BJ (cell line): ENCODE measurements at regions of chr22 and their contacts with region 1.

Region 1: GRCh38 chr22:25048659-25049647 is 96.4 kb downstream of the KIAA1671 start:
- DNase-seq: no peak
- H3K4me3 ChIP-seq: no peak overlapping the region
- H3K27me3 ChIP-seq: no peaks in the 10 kb centered on the region
- CTCF ChIP-seq: peak; percentile 77

Region 2: DNA sequence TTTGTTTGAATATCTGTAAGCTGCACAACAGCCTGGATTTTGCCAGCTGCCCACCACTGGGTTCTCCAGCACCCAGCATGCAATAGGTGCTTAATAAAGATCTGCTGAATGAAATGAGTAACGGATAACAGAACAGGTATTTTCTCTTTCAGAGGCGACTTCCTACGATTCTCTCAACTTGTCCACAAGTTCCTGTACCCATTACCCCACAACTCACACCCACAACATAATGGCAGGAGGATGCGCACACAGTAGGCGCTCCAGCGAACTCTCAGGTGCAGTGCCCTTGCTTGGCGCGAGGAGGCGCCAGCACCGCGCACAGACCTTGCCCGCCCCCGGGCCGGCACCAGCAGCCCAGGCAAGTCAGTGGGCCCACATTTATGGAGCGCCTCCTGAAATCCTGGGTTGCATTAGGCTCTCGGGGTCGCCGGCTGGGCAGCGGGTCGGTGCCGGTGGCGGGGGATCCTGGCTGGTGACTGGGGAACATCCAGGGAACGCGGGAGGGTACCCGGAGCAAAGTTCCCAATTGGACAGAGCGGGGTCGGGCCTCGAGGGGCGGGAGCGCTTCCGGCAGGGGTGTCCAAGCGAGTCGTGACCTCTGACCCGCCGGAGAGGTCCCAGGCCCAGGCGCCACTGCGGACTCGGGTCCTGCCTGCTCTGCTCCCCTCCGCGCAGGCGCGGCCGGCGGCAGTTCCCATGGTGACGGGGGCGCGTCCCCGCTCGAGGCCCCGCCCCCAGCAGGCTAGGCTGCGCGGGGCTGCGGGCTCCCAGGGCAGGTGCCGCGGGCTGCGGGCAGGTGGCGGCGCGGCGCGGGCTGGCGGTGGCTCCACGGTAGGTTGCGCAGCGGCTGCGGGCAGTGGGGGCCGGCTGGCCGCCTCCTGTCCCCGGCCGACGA is 96.8 kb before region 1 on chr22 and contains the start of gene KIAA1671:
- CTCF ChIA-PET with region 1: interaction called, 33 read pairs
- POLR2A ChIA-PET with region 1: no interaction called
- DNase-seq: no peak
- H3K4me3 ChIP-seq: peak within 1 kb of the TSS; percentile 68
- H3K27me3 ChIP-seq: peaks cover 11% of the 10 kb centered on the region
- CTCF ChIP-seq: peak; percentile 96
- polyA plus RNA-seq, gene KIAA1671: 0.11 and 0.15 TPM in 2 replicates

Region 3: GRCh38 chr22:25035715-25036114 is 13.2 kb before region 1 on chr22:
- CTCF ChIA-PET with region 1: interaction called, 10 read pairs
- POLR2A ChIA-PET with region 1: no interaction called
- DNase-seq: no peak
- H3K4me3 ChIP-seq: no peak overlapping the region
- H3K27me3 ChIP-seq: no peaks in the 10 kb centered on the region
- CTCF ChIP-seq: no peak

Region 4: DNA sequence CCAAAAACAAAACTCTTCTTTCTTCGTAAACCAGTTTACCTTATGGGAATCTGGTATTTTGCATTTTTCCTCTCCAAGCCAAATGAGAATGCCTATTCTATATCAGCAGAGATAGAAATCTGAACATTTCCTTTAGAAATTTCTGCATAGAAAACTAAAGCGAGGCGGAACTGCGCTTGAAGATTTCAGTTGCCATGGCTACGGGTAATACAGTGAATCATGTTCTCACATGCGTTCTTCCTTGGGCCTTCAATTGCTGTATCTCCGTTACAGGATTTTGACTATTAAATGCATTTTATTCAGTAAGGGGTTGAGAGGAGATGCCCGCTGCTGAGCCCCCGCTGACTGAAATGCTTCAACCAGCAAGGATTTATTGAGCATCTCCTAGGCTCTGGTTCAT is 42.5 kb after region 1 on chr22:
- CTCF ChIA-PET with region 1: no interaction called
- POLR2A ChIA-PET with region 1: no interaction called
- DNase-seq: no peak
- H3K4me3 ChIP-seq: no peak overlapping the region
- H3K27me3 ChIP-seq: no peaks in the 10 kb centered on the region
- CTCF ChIP-seq: no peak